Endothelial cell of umbilical vein (primary cell): ENCODE measurements at regions of chr7 and their contacts with region 1.

Region 1: DNA sequence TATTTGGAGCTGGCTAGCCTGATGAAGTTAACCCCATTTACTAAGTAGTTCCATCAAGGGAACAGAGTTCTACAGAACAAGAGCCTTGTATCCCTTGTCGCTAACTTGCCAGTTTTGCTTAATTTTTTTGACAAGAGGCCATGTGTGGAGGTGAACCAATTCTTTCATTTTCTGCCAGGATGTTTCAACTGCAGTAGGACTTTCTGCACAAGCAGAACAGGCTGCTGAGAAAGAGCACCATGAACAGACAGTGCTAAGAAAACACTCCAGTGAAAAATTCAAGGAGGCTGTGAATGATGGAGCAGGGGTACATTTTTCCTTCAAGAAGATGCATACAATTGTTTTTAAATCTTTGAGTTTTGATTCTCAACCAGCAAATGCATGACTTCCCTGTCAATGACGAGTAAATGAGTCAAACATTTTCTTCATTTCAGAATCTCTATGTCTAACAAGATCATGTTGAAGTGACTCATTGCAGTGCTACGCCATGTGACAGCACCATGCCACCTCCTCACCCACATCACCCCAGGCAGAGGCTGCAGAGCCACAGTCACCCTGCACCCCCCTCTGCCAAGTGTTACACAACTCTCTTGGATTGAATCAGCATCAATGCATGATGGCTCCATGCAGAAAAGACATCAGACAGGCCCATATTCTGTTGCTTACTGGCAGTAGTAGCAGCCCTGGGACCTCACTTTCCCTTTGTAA is 193.1 kb downstream of the COBL start:
- DNase-seq: no peak
- H3K4me3 ChIP-seq: no peak overlapping the region
- H3K27ac ChIP-seq: no peak overlapping the region
- H3K4me1 ChIP-seq: peaks cover 12% of the 10 kb centered on the region
- H3K27me3 ChIP-seq: peaks cover 0 to 1% of the 10 kb centered on the region in 2 experiments
- CTCF ChIP-seq: no peak
- POLR2A ChIP-seq: no peak

Region 2: DNA sequence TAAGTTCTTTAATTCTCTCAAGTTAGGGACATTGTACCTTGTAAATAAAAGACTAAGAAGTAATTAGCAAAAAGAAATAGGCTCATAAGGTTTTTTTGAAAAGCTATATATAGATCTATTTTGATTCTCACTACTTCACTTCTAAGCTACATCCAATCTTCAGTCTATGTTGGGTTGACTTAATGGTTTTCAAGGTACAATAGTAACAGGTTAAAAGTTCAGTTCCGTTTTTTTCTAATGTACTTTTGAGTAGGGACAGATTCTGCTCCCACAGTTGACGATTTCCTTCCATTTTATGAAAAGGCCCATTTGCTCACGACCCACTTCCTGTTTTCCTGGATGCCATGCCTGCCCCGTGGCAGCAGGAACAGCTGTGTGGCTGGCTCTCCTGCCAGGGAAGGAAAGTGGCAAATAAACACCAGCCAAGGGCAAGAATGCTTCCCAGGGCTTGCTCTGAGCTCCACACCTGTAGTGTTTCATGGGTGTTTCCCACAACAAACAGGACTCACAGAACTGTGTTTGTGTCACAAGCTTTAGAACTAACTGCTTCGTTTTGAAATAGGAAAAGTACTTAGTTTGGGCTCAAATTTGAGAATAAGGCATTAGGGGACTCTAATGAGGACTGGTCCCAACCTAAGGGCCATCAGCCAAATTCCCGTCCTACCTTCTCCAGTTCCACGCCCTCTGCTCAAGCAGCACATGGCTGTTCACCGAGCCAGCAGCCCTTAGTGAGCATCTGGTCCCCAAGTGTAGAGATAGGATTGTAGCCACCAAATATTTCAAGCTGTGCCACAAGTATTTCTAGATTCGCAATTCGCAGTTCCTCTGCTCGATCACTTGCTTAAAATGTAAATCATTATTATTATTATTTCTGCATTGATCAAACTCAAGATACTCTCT is 47.5 kb before region 1 on chr7:
- CTCF ChIA-PET with region 1: no interaction called
- POLR2A ChIA-PET with region 1: no interaction called
- dilution Hi-C with region 1: no loop called
- intact Hi-C with region 1: loop called (anchors 1 kb)
- DNase-seq: peak; percentile 91
- H3K4me3 ChIP-seq: no peak overlapping the region
- H3K27ac ChIP-seq: peak overlapping the region; percentile 43
- H3K4me1 ChIP-seq: peaks cover 16% of the 10 kb centered on the region
- H3K27me3 ChIP-seq: peaks cover 0 to 2% of the 10 kb centered on the region in 2 experiments
- CTCF ChIP-seq: no peak
- POLR2A ChIP-seq: no peak

Region 3: DNA sequence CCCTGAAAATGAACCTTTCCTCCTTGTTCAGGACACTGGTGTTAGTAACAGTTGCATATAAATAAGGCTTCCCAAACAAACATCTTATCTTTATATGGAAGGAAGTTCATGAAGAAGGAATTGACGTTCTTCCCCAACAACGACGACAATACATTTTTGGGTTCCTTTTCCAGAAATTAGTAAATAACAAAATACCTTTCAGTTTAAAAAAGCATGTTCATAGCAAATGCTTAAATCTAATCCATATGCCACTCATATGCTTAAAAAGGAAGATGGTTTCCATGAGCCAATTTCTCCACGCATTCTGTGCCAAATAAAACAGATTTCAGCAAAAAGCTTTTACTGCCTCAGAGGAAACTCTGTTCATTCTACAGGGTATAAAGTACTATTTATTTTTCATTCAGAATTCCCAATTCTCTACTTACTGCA is 10.6 kb after region 1 on chr7:
- CTCF ChIA-PET with region 1: interaction called, 4 read pairs
- POLR2A ChIA-PET with region 1: no interaction called
- dilution Hi-C with region 1: no loop called
- intact Hi-C with region 1: loop called (anchors 1 kb)
- DNase-seq: peak; percentile 93
- H3K4me3 ChIP-seq: no peak overlapping the region
- H3K27ac ChIP-seq: peak overlapping the region; percentile 72
- H3K4me1 ChIP-seq: peaks cover 20% of the 10 kb centered on the region
- H3K27me3 ChIP-seq: no peaks in the 10 kb centered on the region
- CTCF ChIP-seq: no peak
- POLR2A ChIP-seq: no peak